Aorta (tissue), 5 donors: ENCODE measurements at regions of chr13 and their contacts with region 1.

Region 1: GRCh38 chr13:23020223-23020843 is 160.4 kb upstream of the SGCG start:
- DNase-seq: no peak
- ATAC-seq: peak; percentile 83
- H3K4me3 ChIP-seq: no peak overlapping the region
- H3K27ac ChIP-seq: no peak overlapping the region
- H3K4me1 ChIP-seq: no peaks in the 10 kb centered on the region
- H3K27me3 ChIP-seq: no peaks in the 10 kb centered on the region

Region 2: GRCh38 chr13:22801402-22802003 is 218.8 kb before region 1 on chr13:
- intact Hi-C with region 1: loop called (anchors 5 kb)
- DNase-seq: no peak
- ATAC-seq: no peak
- H3K4me3 ChIP-seq: no peak overlapping the region
- H3K27ac ChIP-seq: no peak overlapping the region
- H3K4me1 ChIP-seq: no peaks in the 10 kb centered on the region
- H3K27me3 ChIP-seq: no peaks in the 10 kb centered on the region

Region 3: DNA sequence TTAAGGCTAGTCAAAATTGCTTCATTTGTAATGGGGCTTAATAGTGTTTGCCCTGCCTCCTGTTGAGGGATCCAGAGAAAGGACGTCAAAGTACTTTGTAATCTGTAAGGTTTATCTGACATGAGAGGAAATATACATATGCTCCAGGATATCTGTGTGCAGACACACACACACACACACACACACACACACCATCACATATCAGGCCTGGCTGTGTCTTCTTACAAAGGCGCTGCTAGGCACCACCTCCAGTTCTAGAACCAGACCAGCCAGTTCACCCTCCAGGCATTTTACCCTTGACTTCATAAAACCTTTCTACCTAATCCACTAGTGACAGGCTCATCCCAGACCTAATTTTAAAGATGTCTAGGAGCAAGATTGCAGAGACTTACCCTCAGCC is 41.2 kb before region 1 on chr13:
- intact Hi-C with region 1: no loop called
- DNase-seq: no peak
- ATAC-seq: no peak
- H3K4me3 ChIP-seq: no peak overlapping the region
- H3K27ac ChIP-seq: no peak overlapping the region
- H3K4me1 ChIP-seq: no peaks in the 10 kb centered on the region
- H3K27me3 ChIP-seq: no peaks in the 10 kb centered on the region

Region 4: DNA sequence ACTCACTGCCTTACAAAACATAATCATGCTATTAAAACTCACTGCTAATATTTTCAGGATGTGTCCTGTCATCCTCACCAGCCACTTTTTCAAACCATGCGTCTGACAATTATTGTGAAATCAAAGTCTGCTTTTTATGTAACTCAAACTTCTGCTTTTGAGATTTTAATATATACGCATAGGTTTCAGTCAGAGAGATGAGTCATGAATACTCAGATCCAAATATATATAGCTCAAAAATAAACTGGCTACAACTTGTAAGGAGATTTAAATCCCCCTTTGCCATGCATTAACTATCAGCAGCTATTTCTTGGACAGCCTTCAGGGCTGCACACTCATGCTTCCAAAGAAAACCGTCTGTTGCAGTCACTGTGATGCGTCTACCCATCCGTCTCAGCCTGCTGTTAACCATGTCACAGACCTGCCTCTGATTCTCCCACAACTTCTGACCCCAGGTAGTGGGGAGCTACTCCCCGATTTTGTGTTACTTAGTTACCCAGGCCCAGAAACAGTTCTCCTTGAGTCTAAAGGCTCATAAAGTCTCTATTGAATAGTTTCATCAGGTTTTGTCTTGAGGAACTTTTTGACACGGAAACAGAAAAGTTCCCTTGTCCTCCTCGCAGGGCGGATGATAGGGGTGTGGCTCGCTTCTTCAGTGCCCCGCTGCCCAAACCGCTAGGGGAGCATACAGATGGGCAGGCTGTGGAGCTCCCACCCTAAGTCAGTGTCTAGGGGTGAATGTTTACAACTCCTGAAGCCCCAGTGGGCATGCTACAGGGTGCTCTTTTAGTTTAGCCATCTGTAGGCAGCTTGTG is 126.7 kb after region 1 on chr13:
- intact Hi-C with region 1: no loop called
- DNase-seq: no peak
- ATAC-seq: no peak
- H3K4me3 ChIP-seq: no peak overlapping the region
- H3K27ac ChIP-seq: no peak overlapping the region
- H3K4me1 ChIP-seq: no peaks in the 10 kb centered on the region
- H3K27me3 ChIP-seq: no peaks in the 10 kb centered on the region